ENCODE measurements at regions of chr19 and their contacts with region 1.

Region 1: DNA sequence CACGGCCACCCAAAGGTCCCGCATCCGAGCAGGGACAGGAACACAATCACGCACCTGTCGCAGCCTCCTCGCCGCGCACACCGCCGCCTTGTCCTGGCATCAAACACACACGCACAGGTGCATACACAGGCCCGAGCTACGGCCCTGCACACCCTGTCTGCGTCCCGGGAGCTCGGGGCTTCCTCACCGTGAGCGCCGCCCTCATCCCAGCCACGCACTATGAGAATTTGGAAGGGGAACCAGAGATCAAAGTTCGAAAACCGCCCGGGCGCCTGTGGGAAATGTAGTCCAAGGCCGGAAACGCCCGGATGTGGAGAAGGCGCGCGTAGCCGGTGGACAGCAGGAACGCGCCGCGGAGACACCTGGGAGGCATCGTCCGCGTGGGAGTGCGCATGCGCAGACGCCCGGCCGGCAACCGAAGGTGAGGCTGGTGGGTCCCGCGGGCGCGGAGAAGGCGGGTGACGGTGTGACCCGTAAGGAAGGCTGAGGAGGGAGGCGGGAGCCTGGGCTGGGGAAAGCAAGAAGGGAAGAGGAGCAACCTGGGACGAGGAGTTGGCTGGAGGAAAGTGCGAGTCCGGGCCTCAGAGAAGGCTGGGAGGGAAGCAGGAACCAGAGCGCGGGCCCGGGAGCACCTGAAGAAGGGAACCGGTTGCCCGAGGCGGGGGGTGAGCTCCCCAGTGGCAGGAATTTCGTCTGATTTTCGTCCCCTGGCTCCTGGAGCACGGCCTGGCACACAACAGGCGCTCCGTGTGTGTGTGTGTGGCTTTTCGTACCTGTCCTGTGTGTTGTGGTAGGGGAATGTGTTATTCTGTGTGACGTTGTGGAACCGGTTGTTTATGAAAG is at the start of gene ZNF567:
- DNase-seq: peak; percentile 90 to 99 (median 93)
- ATAC-seq: peak; percentile 97
- H3K4me3 ChIP-seq: peak within 1 kb of the TSS; percentile 85
- H3K4me3 Mint-ChIP-seq: peak within 1 kb of the TSS; percentile 94 to 100 (median 98)
- H3K27ac ChIP-seq: peak within 1 kb of the TSS; percentile 86
- H3K27ac Mint-ChIP-seq: peak within 1 kb of the TSS; percentile 92 to 97 (median 95)
- H3K4me1 ChIP-seq: peaks cover 13 to 22% of the 10 kb centered on the region in 2 donors
- H3K4me1 Mint-ChIP-seq: peaks cover 26 to 49% (median 40%) of the 10 kb centered on the region in 7 donors
- H3K27me3 ChIP-seq: no peaks in the 10 kb centered on the region
- H3K27me3 Mint-ChIP-seq: peaks cover 0 to 5% (median 0%) of the 10 kb centered on the region in 5 donors
- total RNA-seq, gene ZNF567: 7.0 to 18.3 (median 9.3) TPM

Region 2: DNA sequence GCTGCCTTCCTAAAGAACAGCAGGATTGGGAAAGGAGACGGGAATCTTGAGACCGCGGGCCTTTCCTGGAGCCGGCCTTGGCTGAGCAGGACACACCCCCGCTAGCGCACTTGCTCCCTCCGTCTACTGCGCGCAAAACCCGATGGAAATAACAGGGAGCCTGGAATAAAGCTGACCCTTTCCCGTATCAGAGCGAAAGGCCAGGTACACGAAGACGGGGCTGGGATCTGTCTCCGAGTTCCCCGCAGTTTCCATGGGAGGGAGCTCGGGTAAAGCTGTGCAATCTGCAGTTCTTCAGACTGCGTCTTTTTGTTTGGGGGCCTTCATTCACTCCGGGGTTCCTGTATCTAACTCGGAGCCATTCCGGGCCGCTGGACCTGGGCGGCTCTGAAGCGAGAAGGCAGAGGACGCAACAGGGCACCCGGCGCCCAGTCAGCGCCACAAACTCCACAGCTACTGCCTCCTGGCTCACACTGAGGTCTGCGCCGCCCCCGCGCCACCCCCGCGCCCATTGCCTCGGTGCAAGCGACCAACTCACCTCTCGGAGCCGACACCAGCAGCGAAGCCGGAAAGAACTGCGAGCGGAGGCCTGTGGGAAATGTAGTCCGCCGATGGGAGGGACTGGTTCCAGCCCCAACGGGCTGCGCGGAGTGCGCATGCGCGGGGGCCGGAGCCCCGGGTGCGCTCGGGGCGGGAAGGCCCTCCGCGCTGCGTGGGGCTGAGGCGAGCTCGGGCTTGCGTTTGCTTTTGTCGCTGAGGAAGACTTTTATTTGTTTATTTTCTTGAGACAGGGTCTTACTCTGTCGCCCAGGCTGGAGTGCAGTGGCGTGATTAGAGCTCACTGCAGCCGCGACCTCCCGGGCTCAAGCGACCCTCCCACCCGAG is 308.6 kb before region 1 on chr19 and contains the start of gene ZFP14:
- CTCF ChIA-PET with region 1: no interaction called
- POLR2A ChIA-PET with region 1: no interaction called
- intact Hi-C with region 1: loop called in 1 of 2 experiments (anchors 10 kb)
- DNase-seq: peak; percentile 86 to 95 (median 93)
- ATAC-seq: peak; percentile 99
- H3K4me3 ChIP-seq: peak within 1 kb of the TSS; percentile 86
- H3K4me3 Mint-ChIP-seq: peak within 1 kb of the TSS; percentile 82 to 98 (median 94)
- H3K27ac ChIP-seq: peak within 1 kb of the TSS; percentile 86
- H3K27ac Mint-ChIP-seq: peak within 1 kb of the TSS; percentile 55 to 98 (median 94)
- H3K4me1 ChIP-seq: peaks cover 0 to 10% of the 10 kb centered on the region in 2 donors
- H3K4me1 Mint-ChIP-seq: peaks cover 9 to 23% (median 21%) of the 10 kb centered on the region in 7 donors
- H3K27me3 ChIP-seq: no peaks in the 10 kb centered on the region
- H3K27me3 Mint-ChIP-seq: no peaks in the 10 kb centered on the region
- total RNA-seq, gene ZFP14: 5.3 to 24.0 (median 9.2) TPM

Region 3: GRCh38 chr19:36573020-36573885 is 114.2 kb before region 1 on chr19 and contains the start of gene ZNF529:
- CTCF ChIA-PET with region 1: no interaction called
- POLR2A ChIA-PET with region 1: no interaction called
- intact Hi-C with region 1: loop called (anchors 1 to 2 kb)
- DNase-seq: peak; percentile 67 to 95 (median 85)
- ATAC-seq: peak; percentile 95
- H3K4me3 ChIP-seq: peak within 1 kb of the TSS; percentile 95
- H3K4me3 Mint-ChIP-seq: peak within 1 kb of the TSS; percentile 80 to 100 (median 93)
- H3K27ac ChIP-seq: peak within 1 kb of the TSS; percentile 98
- H3K27ac Mint-ChIP-seq: peak within 1 kb of the TSS; percentile 94 to 100 (median 98)
- H3K4me1 ChIP-seq: peaks cover 0 to 15% of the 10 kb centered on the region in 2 donors
- H3K4me1 Mint-ChIP-seq: peaks cover 23 to 46% (median 40%) of the 10 kb centered on the region in 7 donors
- H3K27me3 ChIP-seq: no peaks in the 10 kb centered on the region
- H3K27me3 Mint-ChIP-seq: no peaks in the 10 kb centered on the region
- total RNA-seq, gene ZNF529: 22.6 to 37.8 (median 33.8) TPM

Region 4: GRCh38 chr19:36750066-36750691 is 62.7 kb after region 1 on chr19:
- CTCF ChIA-PET with region 1: no interaction called
- POLR2A ChIA-PET with region 1: no interaction called
- intact Hi-C with region 1: no loop called
- DNase-seq: no peak
- ATAC-seq: no peak
- H3K4me3 ChIP-seq: peak overlapping the region; percentile 5
- H3K4me3 Mint-ChIP-seq: no peak overlapping the region
- H3K27ac ChIP-seq: no peak overlapping the region
- H3K27ac Mint-ChIP-seq: peak overlapping the region in 1 of 9 donors; percentile 31
- H3K4me1 ChIP-seq: no peaks in the 10 kb centered on the region
- H3K4me1 Mint-ChIP-seq: no peaks in the 10 kb centered on the region
- H3K27me3 ChIP-seq: no peaks in the 10 kb centered on the region
- H3K27me3 Mint-ChIP-seq: no peaks in the 10 kb centered on the region

Region 5: DNA sequence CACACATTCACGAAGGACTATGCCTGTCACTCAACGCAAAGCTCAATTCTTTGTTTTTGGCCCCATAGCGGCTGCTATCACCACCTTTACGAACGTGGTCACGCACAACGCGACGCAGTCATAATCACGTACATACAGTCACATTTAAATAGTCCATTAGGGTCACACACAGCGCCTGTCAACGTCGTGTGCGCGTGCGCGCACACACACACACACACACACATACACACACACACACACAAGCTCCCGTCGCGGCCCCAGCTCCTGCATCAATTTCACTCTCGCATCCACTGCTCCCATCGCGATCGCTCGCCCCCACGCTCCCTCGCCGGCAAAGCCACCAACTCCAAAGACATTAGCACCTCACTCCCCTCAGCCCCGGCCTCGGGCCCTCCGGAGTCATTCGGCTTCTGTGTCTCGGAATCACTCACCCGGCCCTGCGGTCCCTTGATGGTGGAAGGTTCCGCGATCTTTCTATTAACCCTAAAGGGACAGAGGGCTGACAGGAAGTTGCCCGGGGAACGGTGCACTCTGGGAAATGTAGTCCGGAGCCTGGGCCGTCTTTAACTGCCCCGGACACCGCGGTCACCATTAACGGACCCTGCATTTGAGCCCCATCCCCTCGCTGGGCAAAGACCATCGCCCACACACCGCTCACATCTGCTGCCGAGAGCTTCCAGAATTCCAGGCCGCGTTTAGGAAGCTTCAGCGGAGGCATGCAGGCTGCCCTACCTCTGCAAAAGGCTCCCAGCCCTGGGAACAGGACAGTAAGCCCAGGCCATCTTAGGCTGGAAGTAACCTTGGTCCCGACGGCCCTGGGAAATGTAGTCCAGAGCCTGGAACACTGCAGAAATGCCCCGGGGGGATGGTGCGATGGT is 150.7 kb after region 1 on chr19 and contains the start of gene ZNF790:
- CTCF ChIA-PET with region 1: no interaction called
- POLR2A ChIA-PET with region 1: no interaction called
- intact Hi-C with region 1: loop called (anchors 1 to 5 kb)
- DNase-seq: peak; percentile 68 to 91 (median 85)
- ATAC-seq: peak; percentile 95
- H3K4me3 ChIP-seq: peak within 1 kb of the TSS; percentile 92
- H3K4me3 Mint-ChIP-seq: peak within 1 kb of the TSS in 1 of 10 donors; percentile 22
- H3K27ac ChIP-seq: peak within 1 kb of the TSS; percentile 92
- H3K27ac Mint-ChIP-seq: peak within 1 kb of the TSS in 5 of 9 donors; percentile 39 to 65 (median 51)
- H3K4me1 ChIP-seq: peaks cover 6 to 11% of the 10 kb centered on the region in 2 donors
- H3K4me1 Mint-ChIP-seq: peaks cover 0 to 21% (median 14%) of the 10 kb centered on the region in 7 donors
- H3K27me3 ChIP-seq: no peaks in the 10 kb centered on the region
- H3K27me3 Mint-ChIP-seq: no peaks in the 10 kb centered on the region
- total RNA-seq, gene ZNF790: 2.6 to 14.4 (median 7.3) TPM

Region 6: DNA sequence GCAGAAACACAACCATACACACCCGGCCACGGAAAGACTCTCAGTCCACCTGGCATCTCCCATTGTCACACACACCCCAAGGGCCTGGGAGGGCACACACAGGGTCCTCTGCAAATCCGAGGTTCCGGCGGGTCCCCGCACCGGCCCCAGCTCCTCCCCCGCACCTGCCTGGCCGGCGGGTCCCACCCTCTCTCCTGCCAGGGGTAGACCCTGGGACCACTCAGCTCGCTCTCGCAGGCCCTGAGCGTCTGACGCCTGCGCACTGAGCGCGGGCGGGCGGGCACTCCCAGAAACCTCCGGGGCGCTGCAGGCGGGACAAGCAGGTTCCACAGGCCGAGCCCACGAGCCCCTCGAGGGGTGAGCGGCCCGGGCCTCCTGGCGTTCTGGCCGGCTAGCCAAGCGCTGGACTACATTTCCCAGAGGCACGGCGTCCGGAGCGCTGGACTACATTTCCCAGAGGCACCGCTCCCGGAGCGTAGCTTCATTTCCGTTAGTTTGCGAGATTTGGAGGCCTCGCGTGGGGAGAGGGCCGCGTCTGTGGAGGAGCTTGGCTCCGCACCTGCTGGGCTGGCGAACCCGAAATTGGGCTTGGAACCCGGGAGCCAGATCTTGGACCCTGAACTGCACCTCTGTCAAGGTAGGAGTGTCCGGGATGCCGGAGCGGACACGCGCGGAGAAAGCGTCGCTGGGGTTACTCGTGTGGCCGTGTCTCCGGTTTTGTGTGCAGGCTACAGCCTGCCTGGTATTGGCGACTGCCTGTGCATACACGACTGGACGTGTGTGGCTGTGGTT is 390.7 kb after region 1 on chr19 and contains the start of gene ZNF420:
- CTCF ChIA-PET with region 1: no interaction called
- POLR2A ChIA-PET with region 1: no interaction called
- intact Hi-C with region 1: loop called (anchors 1 kb)
- DNase-seq: peak; percentile 64 to 89 (median 84)
- ATAC-seq: peak; percentile 98
- H3K4me3 ChIP-seq: peak within 1 kb of the TSS; percentile 92
- H3K4me3 Mint-ChIP-seq: peak within 1 kb of the TSS; percentile 90 to 100 (median 96)
- H3K27ac ChIP-seq: peak within 1 kb of the TSS; percentile 82
- H3K27ac Mint-ChIP-seq: peak within 1 kb of the TSS; percentile 70 to 99 (median 94)
- H3K4me1 ChIP-seq: peaks cover 11 to 19% of the 10 kb centered on the region in 2 donors
- H3K4me1 Mint-ChIP-seq: peaks cover 16 to 43% (median 34%) of the 10 kb centered on the region in 7 donors
- H3K27me3 ChIP-seq: no peaks in the 10 kb centered on the region
- H3K27me3 Mint-ChIP-seq: no peaks in the 10 kb centered on the region
- total RNA-seq, gene ZNF420: 10.8 to 34.9 (median 15.9) TPM

Region 7: GRCh38 chr19:37655689-37656371 is 968.4 kb after region 1 on chr19:
- CTCF ChIA-PET with region 1: no interaction called
- POLR2A ChIA-PET with region 1: no interaction called
- intact Hi-C with region 1: loop called in 1 of 2 experiments (anchors 5 kb)
- DNase-seq: peak; percentile 74 to 90 (median 86)
- ATAC-seq: peak; percentile 86
- H3K4me3 ChIP-seq: peak overlapping the region; percentile 95
- H3K4me3 Mint-ChIP-seq: peak overlapping the region; percentile 82 to 99 (median 96)
- H3K27ac ChIP-seq: peak overlapping the region; percentile 89
- H3K27ac Mint-ChIP-seq: peak overlapping the region; percentile 81 to 99 (median 97)
- H3K4me1 ChIP-seq: peaks cover 8 to 16% of the 10 kb centered on the region in 2 donors
- H3K4me1 Mint-ChIP-seq: peaks cover 28 to 40% (median 33%) of the 10 kb centered on the region in 7 donors
- H3K27me3 ChIP-seq: no peaks in the 10 kb centered on the region
- H3K27me3 Mint-ChIP-seq: peaks cover 0 to 3% (median 0%) of the 10 kb centered on the region in 5 donors